ENCODE measurements at regions of chr3 and their contacts with region 1.

Region 1: DNA sequence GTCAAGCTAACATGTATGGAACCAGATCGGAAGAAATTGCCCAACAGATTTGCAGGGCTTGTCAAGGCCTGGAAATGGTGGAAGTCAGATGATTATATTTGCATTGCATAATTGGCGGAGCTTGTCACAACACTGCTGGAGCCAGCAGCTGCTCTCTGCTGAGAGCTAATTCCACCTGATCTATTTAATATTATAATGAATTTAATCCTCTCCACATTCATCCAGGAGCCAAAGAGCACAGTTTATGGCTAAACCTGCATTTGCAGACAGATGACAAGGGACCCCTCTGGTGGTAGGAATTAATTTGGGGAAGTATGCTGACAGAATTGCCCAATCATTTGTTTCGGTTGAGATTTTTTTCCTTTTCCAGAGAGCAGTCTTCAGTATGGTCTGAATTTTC is 730.2 kb downstream of the TUSC7 start:
- DNase-seq: peak in 26 of 42 donors; percentile 4 to 70 (median 20)

Region 2: GRCh38 chr3:117059067-117059955 is 380.5 kb before region 1 on chr3:
- intact Hi-C with region 1: loop called (anchors 10 kb)
- DNase-seq: peak in 6 of 42 donors; percentile 7 to 49 (median 33)

Region 3: DNA sequence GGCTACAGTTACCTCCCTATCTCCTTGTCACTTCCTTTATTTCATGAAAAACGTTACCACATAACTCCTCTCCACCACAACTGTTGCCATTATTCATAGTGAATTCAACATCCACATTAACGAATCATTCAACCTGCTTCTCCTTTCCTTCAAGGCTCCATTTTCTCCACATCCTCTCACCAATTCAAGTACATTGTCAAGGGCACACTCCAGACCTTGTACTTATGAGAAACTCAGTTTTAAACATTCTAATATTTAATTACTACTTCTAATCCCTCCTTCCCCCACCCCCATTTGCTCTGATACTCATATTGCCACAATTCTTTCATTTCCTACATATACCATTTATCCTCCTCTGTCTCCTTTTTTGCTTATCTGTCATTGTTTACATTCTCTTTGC is 141.0 kb after region 1 on chr3:
- intact Hi-C with region 1: no loop called
- DNase-seq: no peak

Measured in head of caudate nucleus (tissue), 42 donors.